Dorsolateral prefrontal cortex (tissue), 120 donors: ENCODE measurements at regions of chr18 and their contacts with region 1.

Region 1: GRCh38 chr18:616380-616995 is 19.7 kb downstream of the CLUL1 start:
- DNase-seq: no peak
- H3K4me3 ChIP-seq: no peak overlapping the region
- H3K27ac ChIP-seq: no peak overlapping the region
- H3K27me3 ChIP-seq: no peaks in the 10 kb centered on the region
- CTCF ChIP-seq: peak; percentile 56 to 94 (median 80)

Region 2: DNA sequence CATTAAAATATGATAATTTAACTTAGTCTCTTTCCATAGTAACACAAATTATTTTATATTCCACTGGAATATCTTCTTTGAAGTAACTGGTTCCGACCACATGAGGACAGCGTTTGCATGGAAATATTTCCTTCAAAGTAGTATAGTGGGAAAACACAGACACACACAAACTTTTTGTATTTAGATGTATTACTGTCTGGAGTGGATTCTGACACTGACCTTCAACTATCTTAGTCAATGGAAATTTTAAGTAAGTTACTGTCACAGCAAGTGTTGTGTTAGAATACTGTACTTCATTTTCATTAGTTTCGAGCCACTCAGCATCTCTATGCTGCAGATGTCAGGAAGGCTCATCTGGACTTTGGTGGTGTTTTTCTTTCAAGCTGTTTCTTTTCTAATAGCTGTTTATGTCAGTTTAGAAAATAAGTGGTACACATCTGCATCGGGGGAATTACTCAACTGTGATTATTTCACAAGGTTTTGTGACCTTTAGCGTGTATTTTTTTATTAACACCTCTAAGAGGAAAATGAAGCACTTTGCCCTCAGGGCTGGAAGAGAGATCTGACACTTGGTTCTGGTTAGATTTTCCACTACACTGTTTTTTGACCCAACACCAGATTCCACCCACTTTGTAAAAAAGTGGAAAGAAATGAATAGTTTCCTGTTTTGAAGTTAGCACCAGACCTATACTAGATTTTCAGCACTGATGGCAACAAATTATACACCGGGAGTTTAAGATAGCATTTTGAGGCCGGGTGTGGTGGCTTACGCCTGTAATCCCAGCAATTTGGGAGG is 329.8 kb before region 1 on chr18:
- intact Hi-C with region 1: loop called (anchors 5 kb)
- DNase-seq: peak in 1 of 10 donors; percentile 21
- H3K4me3 ChIP-seq: no peak overlapping the region
- H3K27ac ChIP-seq: no peak overlapping the region
- H3K27me3 ChIP-seq: no peaks in the 10 kb centered on the region
- CTCF ChIP-seq: peak in 55 of 56 donors; percentile 37 to 81 (median 59)

Region 3: GRCh38 chr18:293536-293935 is 323.0 kb before region 1 on chr18:
- intact Hi-C with region 1: loop called (anchors 5 kb)
- DNase-seq: no peak
- H3K4me3 ChIP-seq: no peak overlapping the region
- H3K27ac ChIP-seq: no peak overlapping the region
- H3K27me3 ChIP-seq: no peaks in the 10 kb centered on the region
- CTCF ChIP-seq: peak in 24 of 56 donors; percentile 7 to 59 (median 26)

Region 4: GRCh38 chr18:499551-500408 is 116.7 kb before region 1 on chr18:
- intact Hi-C with region 1: loop called in 1 of 2 experiments (anchors 10 kb)
- DNase-seq: no peak
- H3K4me3 ChIP-seq: peak overlapping the region; percentile 11 to 77 (median 59)
- H3K27ac ChIP-seq: peak overlapping the region in 13 of 59 donors; percentile 26 to 77 (median 41)
- H3K27me3 ChIP-seq: peaks cover 0 to 50% (median 19%) of the 10 kb centered on the region in 45 donors
- CTCF ChIP-seq: peak in 8 of 56 donors; percentile 10 to 36 (median 14)

Region 5: GRCh38 chr18:731185-731584 is 114.7 kb after region 1 on chr18:
- intact Hi-C with region 1: no loop called
- DNase-seq: no peak
- H3K4me3 ChIP-seq: no peak overlapping the region
- H3K27ac ChIP-seq: no peak overlapping the region
- H3K27me3 ChIP-seq: no peaks in the 10 kb centered on the region
- CTCF ChIP-seq: no peak